ENCODE measurements at regions of chr1 and their contacts with region 1.

Region 1: DNA sequence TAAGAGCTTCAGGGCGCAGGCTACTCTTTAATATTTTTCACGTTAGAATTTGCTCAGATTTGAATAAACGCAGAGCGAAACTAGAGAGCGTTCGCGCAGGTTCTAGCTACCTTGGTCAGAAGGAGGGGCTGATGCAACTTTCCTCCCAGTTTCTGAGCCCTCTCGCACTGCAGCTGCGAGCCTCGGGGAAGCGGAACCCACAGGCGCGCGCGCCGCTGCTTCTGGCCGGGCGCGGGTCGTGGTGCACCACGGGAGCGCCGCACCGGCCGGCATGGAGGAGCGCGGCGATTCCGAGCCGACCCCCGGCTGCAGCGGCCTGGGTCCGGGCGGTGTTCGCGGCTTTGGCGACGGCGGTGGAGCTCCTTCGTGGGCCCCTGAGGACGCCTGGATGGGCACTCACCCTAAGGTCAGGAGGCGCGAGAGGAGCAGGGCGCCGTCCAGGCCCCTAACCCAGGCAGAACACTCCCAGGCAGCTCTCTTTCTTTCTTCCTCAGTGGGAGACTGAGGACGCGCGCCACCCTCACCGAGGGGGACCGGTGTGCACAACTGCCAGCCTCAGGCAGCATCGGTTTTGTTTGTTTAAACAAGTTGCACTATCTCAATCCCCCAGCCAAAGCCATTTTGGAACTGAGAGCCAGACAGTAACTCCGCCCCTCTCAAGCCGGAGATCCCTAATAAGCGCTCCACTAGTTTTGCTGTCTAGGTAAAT is at the start of gene TSEN15:
- DNase-seq: peak; percentile 71
- H3K4me3 Mint-ChIP-seq: peak within 1 kb of the TSS; percentile 99
- H3K27ac Mint-ChIP-seq: peak within 1 kb of the TSS; percentile 99
- H3K4me1 Mint-ChIP-seq: peaks cover 40% of the 10 kb centered on the region
- H3K27me3 Mint-ChIP-seq: peaks cover 28% of the 10 kb centered on the region
- total RNA-seq, gene TSEN15: 49.8 and 50.2 TPM in 2 replicates

Region 2: DNA sequence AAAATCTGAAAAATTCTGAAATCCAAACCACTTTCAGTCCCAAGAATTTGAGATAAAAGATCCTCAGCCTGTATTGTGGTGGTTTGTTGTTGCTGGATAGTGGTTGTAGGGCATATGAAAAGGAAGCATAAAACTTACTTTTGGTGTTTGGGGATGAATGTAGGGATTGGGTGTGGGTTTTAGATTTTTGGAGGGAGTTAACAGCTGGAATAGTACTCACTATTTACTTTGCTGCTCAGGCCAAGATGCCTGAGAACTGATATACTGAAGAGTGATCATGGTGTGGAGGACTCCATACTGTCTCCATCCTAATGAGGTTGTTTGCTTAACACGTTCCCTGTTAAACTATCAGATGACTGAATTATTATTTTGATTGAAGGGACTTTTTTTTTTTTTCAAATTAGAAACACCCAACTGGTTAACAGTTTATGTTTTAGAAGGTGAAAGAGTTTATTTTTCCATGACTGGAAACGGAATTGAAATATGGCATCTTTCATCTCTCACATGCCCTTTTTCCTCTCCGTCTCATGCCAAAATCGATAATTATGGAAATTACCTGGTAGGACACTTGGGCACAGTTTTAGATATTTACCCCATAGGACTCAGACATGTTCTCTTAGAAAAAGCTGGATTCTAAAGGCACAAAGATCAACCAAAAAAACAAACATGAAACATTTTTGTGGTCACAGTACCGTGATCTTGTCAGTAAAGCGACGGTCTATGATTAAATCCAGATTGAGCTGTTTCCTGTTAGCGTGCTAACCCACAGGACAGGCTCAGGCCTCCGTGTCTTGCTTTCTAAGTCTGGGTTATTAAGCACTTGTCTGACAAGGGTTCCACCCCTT is 209.5 kb before region 1 on chr1:
- intact Hi-C with region 1: loop called (anchors 5 kb)
- DNase-seq: peak; percentile 20
- H3K4me3 Mint-ChIP-seq: peak overlapping the region; percentile 71
- H3K27ac Mint-ChIP-seq: peak overlapping the region; percentile 89
- H3K4me1 Mint-ChIP-seq: peaks cover 33% of the 10 kb centered on the region
- H3K27me3 Mint-ChIP-seq: no peaks in the 10 kb centered on the region

Region 3: DNA sequence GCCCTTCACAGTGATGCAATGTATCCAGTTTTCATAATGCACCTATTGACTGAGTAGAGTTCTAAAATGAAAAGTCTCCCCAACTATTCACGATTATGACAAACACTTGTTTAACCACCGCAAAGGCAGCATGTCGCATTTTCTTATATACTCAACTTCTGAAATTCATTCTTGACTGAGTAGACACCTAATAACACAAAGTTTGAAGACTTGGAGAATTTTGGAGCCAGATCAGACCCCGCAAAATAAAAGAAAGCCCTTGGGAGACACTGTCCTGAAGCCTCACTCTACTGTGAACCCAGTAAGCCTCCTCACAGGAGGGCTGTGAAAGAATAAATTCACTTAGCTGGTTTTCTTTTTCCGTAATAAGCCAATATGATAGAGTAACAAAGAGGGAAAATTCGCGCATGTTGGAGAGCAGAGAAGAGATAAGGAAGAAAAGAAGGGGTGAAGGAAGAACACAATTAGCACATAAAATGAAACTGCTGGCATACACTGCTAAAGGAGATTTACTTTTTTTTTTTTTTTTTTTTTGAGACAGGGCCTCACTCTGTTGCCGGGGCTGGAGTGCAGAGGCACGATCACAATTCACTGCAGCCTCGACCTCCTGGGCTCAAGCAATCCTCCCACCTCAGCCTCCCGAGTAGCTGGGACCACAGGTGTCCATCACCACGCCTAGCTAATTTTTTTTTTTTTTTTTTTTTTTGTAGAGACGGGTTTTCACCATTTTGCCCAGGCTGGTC is 13.6 kb before region 1 on chr1:
- intact Hi-C with region 1: loop called (anchors 1 kb)
- DNase-seq: no peak
- H3K4me3 Mint-ChIP-seq: peak overlapping the region; percentile 68
- H3K27ac Mint-ChIP-seq: peak overlapping the region; percentile 42
- H3K4me1 Mint-ChIP-seq: peaks cover 26% of the 10 kb centered on the region
- H3K27me3 Mint-ChIP-seq: peaks cover 65% of the 10 kb centered on the region

Region 4: DNA sequence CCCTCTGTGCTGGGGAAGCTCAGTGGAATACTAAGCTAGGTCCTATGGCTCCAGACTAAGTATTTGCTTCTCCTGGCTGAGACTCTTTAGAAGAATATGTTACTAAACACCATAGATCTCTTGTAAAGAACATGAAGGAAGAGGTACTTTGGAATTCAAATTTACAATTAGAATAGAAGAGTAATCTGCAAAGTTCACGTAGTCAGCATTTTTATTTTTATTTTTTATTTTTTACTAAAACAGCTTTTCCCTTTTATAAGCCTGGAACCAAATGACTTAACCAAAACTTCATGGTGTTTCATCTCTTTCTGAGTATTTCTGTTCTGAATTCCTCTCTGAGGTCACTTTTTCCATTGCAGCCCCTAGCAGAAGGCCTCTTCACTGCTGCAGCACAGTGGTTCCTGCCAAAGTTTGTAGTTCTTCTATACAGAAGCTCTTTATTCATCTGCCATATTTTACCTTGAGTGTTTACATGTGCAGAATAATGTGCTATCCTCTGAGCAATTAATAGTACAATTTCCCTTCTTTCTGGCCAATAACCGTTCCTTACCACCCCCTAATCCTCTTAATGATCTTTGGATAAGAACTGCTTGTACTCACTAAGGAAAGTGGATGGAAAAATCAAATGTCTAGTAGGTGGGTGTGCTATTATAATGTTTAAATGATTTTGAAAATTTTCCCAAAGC is 27.1 kb after region 1 on chr1:
- intact Hi-C with region 1: no loop called
- DNase-seq: no peak
- H3K4me3 Mint-ChIP-seq: no peak overlapping the region
- H3K27ac Mint-ChIP-seq: peak overlapping the region; percentile 6
- H3K4me1 Mint-ChIP-seq: peaks cover 19% of the 10 kb centered on the region
- H3K27me3 Mint-ChIP-seq: no peaks in the 10 kb centered on the region